ACHN (cell line): ENCODE measurements at regions of chr2 and their contacts with region 1.

Region 1: DNA sequence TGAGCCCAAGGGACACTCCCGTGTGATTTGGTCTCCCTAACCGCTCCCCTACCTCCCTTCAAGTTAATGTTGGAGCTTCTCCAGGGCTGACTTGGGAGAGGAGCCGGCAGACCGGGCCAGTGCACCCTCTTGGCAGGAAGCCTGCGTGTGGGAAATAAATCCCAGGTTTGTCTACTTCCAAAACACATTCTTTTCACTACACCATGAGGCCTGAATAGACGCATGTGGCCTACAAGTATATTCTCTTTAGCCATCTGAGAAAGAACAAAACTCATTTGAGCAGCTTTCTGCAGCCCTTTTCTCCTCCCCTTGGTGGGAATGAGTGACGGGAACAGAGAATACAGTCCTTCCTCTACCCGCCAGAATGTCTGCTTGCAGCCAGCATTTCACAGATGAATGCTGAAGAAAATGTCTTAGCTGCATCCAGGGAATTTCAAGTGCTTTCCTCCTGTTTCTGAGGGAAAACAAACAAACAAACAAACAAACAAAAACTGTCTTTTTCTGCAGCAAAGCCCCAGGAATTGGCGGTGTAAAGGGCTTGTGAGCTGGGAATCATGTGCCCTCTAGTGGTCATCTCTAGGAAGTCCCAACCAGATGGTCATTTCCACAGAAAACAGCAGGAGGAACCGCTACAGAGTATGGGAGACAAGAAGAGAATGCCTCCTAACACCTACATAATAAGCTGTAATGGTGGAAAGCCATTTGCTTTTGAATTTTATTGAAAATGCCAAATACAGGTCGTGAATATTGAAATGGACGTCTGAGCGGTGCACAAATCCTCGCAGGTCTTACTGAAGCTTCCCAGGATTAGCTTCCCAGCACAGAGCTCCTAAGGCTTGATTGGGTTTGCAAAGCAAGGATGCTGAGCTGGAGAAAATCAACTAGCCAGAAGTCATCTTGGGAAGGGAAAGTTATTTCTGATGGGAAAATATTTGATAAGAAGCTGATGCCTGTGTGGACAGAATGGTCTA is 41.2 kb upstream of the DAPL1 start:
- DNase-seq: peak; percentile 63

Region 2: GRCh38 chr2:158034199-158034866 is 719.6 kb before region 1 on chr2:
- in situ Hi-C with region 1: loop called (anchors 25 kb)
- DNase-seq: peak; percentile 77

Region 3: GRCh38 chr2:159445307-159445706 is 691.4 kb after region 1 on chr2:
- in situ Hi-C with region 1: no loop called
- DNase-seq: no peak